Psoas muscle (tissue), 8 donors: ENCODE measurements at regions of chr6 and their contacts with region 1.

Region 1: DNA sequence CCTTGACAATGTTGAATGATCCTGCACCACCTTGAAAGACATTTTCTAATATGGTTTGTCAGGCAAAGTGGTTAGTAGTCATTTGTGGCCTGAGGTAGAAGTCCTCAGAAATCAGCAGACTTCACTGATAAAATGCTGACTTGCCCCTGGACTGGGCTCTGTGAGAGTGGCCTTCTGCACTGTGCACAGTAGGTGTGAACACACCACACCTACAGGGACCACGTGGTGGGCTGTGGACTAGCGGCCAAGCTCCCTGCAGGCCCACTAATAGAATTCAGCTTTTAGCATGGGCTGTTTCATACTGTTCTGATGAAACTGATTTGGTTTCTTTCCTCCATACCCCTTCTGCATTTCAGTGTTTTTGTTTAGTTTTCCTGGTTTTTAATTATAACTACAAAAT is 7.3 kb downstream of the BPHL start:
- DNase-seq: no peak
- ATAC-seq: no peak
- H3K4me3 ChIP-seq: no peak overlapping the region
- H3K27ac ChIP-seq: no peak overlapping the region
- H3K4me1 ChIP-seq: no peaks in the 10 kb centered on the region
- H3K27me3 ChIP-seq: no peaks in the 10 kb centered on the region
- CTCF ChIP-seq: no peak

Region 2: DNA sequence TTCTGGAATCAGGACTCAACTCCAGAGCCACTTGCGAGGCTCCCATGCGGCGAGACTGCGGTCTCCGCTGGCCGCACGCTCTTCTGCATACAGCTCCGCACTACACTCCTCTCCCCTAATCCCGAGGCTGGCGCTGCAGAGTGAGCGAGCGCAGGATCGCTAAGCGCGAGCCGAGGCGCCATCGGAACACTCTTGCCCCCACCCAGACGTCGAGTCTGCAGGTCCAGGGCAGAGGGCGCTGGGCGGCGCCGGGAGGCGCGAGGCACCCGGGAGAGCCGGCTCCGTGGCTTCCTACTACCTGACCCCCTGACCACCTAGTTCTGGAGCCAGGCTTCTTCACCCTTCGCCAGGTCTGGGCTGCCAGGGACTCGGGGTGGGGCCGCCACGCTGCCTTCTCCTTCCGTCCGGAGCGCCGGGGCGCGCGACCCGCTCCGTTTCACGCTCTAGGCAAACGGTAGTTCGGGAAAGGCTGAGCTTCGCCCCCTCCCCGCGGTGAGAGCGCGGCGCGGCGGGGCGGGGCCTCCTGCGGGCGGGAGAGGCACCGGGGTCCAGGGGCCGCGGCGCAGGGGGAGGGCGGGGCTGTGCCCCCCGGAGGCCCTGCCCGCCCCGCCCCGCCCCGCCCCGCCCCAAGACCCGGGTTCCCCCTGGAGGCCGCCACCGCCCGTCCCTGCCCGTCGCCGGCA is 36.9 kb after region 1 on chr6:
- intact Hi-C with region 1: loop called in 1 of 2 experiments (anchors 5 kb)
- DNase-seq: peak; percentile 70 to 83
- ATAC-seq: peak; percentile 79 to 88 (median 82)
- H3K4me3 ChIP-seq: peak overlapping the region; percentile 87
- H3K27ac ChIP-seq: peak overlapping the region; percentile 90
- H3K4me1 ChIP-seq: peaks cover 4% of the 10 kb centered on the region
- H3K27me3 ChIP-seq: no peaks in the 10 kb centered on the region
- CTCF ChIP-seq: no peak